Mammary epithelial cell (primary cell): ENCODE measurements at regions of chr9 and their contacts with region 1.

Region 1: GRCh38 chr9:29211580-29212396 is 1638.5 kb upstream of the C9orf72 start:
- DNase-seq: peak; percentile 67
- H3K4me3 ChIP-seq: peak overlapping the region; percentile 66 to 98 (median 71)
- H3K27ac ChIP-seq: peak overlapping the region; percentile 44
- H3K4me1 ChIP-seq: peaks cover 20% of the 10 kb centered on the region
- H3K27me3 ChIP-seq: peaks cover 5% of the 10 kb centered on the region
- CTCF ChIP-seq: peak; percentile 60 to 81

Region 2: DNA sequence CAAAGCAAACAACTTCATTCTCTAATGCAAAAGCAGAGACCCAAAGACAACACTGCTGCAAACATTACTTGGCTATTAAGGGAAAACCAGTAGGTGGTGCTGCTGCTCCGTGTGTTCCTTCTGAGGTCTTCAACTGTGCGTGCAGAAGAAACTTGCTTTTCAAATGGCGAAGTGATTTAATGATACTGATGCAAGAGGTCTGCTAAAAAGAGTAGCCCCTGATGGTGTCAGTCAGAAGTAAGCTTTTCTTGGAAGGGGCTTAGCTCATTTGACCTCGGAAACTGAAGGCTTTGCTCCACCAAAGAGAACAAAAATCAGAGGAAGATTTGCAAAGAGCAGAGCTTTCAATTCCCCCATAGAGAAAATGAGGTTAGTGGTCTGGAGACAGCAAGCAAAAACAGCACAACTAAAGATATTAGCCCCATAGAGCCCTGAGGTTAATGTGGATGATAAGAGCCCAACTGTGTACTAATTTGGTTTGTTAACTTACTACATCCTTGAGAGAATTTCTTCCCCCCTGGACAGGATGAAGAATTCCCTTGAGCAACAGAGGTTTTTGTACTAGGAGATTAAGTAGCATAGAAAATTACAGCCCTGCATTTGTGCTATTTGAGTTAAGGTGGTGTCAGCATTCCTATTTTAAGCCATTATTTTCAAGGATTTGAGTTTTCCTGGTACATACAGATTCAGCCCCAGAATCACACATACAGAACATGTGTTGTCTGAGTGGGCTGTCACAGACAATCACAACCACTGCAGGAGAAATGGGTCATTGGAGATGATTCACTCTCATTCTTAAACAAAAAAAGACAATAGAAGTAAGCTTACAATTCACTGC is 1485.3 kb before region 1 on chr9:
- CTCF ChIA-PET with region 1: no interaction called
- dilution Hi-C with region 1: no loop called
- in situ Hi-C with region 1: no loop called
- intact Hi-C with region 1: loop called (anchors 1 kb)
- DNase-seq: peak; percentile 60
- H3K4me3 ChIP-seq: no peak overlapping the region
- H3K27ac ChIP-seq: no peak overlapping the region
- H3K4me1 ChIP-seq: no peaks in the 10 kb centered on the region
- H3K27me3 ChIP-seq: no peaks in the 10 kb centered on the region
- CTCF ChIP-seq: peak; percentile 89 to 94

Region 3: GRCh38 chr9:28678097-28678496 is 533.7 kb before region 1 on chr9:
- CTCF ChIA-PET with region 1: no interaction called
- dilution Hi-C with region 1: no loop called
- in situ Hi-C with region 1: no loop called
- intact Hi-C with region 1: loop called (anchors 10 kb)
- DNase-seq: peak; percentile 52
- H3K4me3 ChIP-seq: no peak overlapping the region
- H3K27ac ChIP-seq: no peak overlapping the region
- H3K4me1 ChIP-seq: peaks cover 5% of the 10 kb centered on the region
- H3K27me3 ChIP-seq: no peaks in the 10 kb centered on the region
- CTCF ChIP-seq: no peak

Region 4: GRCh38 chr9:28808042-28808441 is 403.7 kb before region 1 on chr9:
- CTCF ChIA-PET with region 1: no interaction called
- dilution Hi-C with region 1: no loop called
- in situ Hi-C with region 1: no loop called
- intact Hi-C with region 1: no loop called
- DNase-seq: peak; percentile 76
- H3K4me3 ChIP-seq: no peak overlapping the region
- H3K27ac ChIP-seq: peak overlapping the region; percentile 26
- H3K4me1 ChIP-seq: peaks cover 30% of the 10 kb centered on the region
- H3K27me3 ChIP-seq: no peaks in the 10 kb centered on the region
- CTCF ChIP-seq: no peak

Region 5: GRCh38 chr9:28927711-28928110 is 284.1 kb before region 1 on chr9:
- CTCF ChIA-PET with region 1: no interaction called
- dilution Hi-C with region 1: no loop called
- in situ Hi-C with region 1: no loop called
- intact Hi-C with region 1: loop called (anchors 5 kb)
- DNase-seq: peak; percentile 94
- H3K4me3 ChIP-seq: no peak overlapping the region
- H3K27ac ChIP-seq: peak overlapping the region; percentile 56
- H3K4me1 ChIP-seq: peaks cover 66% of the 10 kb centered on the region
- H3K27me3 ChIP-seq: no peaks in the 10 kb centered on the region
- CTCF ChIP-seq: no peak

Region 6: DNA sequence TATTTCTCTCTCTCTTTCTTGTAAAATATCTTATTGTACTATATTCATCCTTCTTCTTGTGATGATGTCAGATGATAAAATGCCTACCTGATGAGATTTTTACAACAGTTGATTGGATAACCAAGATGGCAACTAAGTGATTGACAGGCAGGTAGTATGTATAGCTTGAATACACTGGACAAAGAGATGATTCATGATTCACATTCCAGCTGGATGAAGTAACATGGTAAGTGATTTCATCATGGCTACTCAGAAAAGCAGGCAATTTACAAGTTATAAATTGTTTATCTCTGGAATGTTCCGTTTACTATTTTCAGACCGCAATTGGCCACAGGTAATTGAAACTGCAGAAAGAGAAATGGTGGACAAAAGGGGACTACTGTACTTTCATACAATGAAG is 166.8 kb before region 1 on chr9:
- CTCF ChIA-PET with region 1: no interaction called
- dilution Hi-C with region 1: no loop called
- in situ Hi-C with region 1: no loop called
- intact Hi-C with region 1: loop called (anchors 5 kb)
- DNase-seq: peak; percentile 88
- H3K4me3 ChIP-seq: no peak overlapping the region
- H3K27ac ChIP-seq: peak overlapping the region; percentile 46
- H3K4me1 ChIP-seq: peaks cover 7% of the 10 kb centered on the region
- H3K27me3 ChIP-seq: no peaks in the 10 kb centered on the region
- CTCF ChIP-seq: no peak

Region 7: GRCh38 chr9:29066141-29066640 is 145.6 kb before region 1 on chr9:
- CTCF ChIA-PET with region 1: no interaction called
- dilution Hi-C with region 1: no loop called
- in situ Hi-C with region 1: no loop called
- intact Hi-C with region 1: no loop called
- DNase-seq: no peak
- H3K4me3 ChIP-seq: no peak overlapping the region
- H3K27ac ChIP-seq: no peak overlapping the region
- H3K4me1 ChIP-seq: no peaks in the 10 kb centered on the region
- H3K27me3 ChIP-seq: no peaks in the 10 kb centered on the region
- CTCF ChIP-seq: no peak

Region 8: DNA sequence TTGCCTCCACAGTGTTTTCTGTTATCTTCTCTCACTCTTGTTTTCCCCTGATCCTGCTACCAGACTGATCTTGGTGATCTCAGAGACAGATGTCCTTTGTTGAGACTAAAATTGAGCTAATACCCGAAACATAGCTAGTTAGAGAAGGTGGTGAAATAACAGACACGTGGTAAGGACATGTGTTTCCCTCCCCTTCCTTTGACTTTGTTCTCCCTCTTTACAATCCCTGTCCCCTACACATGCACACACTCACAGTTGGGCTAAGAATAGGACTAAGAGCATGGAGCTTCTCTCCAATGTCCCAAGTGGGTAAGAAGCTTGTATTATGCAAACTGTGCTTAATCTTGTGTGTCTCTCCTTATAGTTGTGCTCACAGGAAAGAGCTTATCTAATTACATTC is 35.6 kb before region 1 on chr9:
- CTCF ChIA-PET with region 1: no interaction called
- dilution Hi-C with region 1: no loop called
- in situ Hi-C with region 1: no loop called
- intact Hi-C with region 1: no loop called
- DNase-seq: no peak
- H3K4me3 ChIP-seq: no peak overlapping the region
- H3K27ac ChIP-seq: no peak overlapping the region
- H3K4me1 ChIP-seq: peaks cover 3% of the 10 kb centered on the region
- H3K27me3 ChIP-seq: no peaks in the 10 kb centered on the region
- CTCF ChIP-seq: no peak

Region 9: GRCh38 chr9:29332789-29333188 is 121.0 kb after region 1 on chr9:
- CTCF ChIA-PET with region 1: no interaction called
- dilution Hi-C with region 1: no loop called
- in situ Hi-C with region 1: no loop called
- intact Hi-C with region 1: loop called (anchors 5 kb)
- DNase-seq: peak; percentile 77
- H3K4me3 ChIP-seq: no peak overlapping the region
- H3K27ac ChIP-seq: peak overlapping the region; percentile 63
- H3K4me1 ChIP-seq: no peaks in the 10 kb centered on the region
- H3K27me3 ChIP-seq: no peaks in the 10 kb centered on the region
- CTCF ChIP-seq: no peak